ENCODE measurements at regions of chr22 and their contacts with region 1.

Region 1: GRCh38 chr22:25076336-25076735 is 123.3 kb upstream of the CRYBB3 start:
- DNase-seq: peak; percentile 82
- H3K4me3 Mint-ChIP-seq: peak overlapping the region; percentile 43
- H3K27ac Mint-ChIP-seq: peak overlapping the region; percentile 87
- H3K4me1 Mint-ChIP-seq: peaks cover 63% of the 10 kb centered on the region
- H3K27me3 Mint-ChIP-seq: no peaks in the 10 kb centered on the region

Region 2: DNA sequence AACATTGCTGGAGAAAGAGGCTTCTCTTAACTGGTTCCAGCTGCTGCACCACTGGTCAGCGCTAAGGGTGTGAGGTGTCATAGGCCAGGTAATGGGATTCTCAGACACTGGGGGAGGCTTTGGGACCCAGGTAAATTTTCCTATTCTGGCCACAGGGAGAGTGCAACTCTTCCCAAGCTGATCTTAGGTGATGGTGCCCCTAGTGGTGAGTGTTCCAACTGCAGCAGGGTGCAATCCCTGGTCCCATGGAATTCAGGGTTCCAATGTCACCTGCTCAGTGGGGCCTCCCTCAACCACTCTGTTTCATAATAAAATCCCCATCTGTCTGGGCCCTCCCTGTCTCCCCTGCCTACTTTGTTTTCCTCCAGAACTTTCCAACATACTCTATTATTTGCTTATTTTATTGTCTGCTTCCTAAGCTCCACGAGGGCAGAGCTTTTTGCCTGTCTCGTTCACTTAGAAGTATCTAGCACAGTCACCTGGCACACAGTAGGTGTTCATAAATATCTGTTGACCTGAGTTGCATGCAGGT is 273.3 kb before region 1 on chr22:
- CTCF ChIA-PET with region 1: no interaction called
- intact Hi-C with region 1: no loop called
- DNase-seq: peak; percentile 76
- H3K4me3 Mint-ChIP-seq: no peak overlapping the region
- H3K27ac Mint-ChIP-seq: no peak overlapping the region
- H3K4me1 Mint-ChIP-seq: peaks cover 12% of the 10 kb centered on the region
- H3K27me3 Mint-ChIP-seq: no peaks in the 10 kb centered on the region

Region 3: DNA sequence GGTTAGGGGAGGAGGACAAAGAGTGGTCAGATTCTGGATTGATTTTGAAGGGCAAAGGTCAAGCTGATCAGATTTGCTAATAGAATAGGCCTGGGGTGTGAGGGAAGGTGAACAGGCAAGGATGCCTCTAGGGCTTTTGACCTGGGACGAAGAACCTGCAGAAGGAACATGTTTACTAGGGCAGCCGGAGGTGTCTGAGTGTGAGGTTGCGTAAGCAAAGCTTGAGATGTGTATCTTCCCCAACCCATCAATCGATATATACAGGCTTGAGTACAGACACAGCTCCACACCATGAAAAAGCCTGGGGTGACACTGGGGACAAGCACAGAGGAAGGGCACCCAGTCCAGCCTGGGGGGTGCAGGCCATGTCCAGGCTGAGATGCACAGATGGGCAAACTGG is 130.9 kb before region 1 on chr22:
- CTCF ChIA-PET with region 1: no interaction called
- intact Hi-C with region 1: no loop called
- DNase-seq: no peak
- H3K4me3 Mint-ChIP-seq: no peak overlapping the region
- H3K27ac Mint-ChIP-seq: no peak overlapping the region
- H3K4me1 Mint-ChIP-seq: no peaks in the 10 kb centered on the region
- H3K27me3 Mint-ChIP-seq: peaks cover 25% of the 10 kb centered on the region

Region 4: DNA sequence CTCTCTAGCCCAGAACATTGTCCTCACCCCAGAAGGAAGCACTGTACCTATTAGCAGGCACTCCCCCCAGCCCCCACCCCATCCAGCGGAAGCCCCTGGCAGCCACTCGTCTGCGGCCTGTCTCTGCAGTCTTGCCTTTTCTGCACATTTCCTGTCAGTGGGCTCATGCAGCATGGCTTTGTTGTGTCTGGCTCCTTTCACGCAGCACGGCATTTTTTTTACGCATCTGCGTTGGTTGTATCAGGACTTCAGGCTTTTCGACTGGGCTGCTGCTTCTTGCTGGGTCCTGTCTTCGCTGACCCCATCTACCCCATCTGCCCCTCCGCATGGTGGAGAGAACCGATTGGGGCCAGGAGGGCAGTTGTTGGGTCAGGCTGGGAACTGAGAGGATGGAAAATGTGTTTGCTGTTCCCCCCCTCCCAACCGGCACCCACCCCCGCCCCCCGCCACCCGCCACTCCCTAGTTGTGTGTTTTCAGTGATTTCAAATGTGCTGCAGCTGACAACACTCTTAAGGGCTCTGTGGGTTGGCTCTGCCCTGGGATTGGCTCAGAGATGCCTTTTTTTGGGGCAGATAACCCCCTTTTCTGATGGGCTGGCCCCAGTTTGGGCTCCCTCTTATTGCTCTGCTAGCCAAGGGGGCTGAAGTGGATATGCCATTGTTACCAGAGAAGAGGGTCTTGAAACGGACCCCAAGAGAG is 13.8 kb before region 1 on chr22:
- CTCF ChIA-PET with region 1: interaction called, 21 read pairs
- intact Hi-C with region 1: loop called (anchors 1 kb)
- DNase-seq: peak; percentile 83
- H3K4me3 Mint-ChIP-seq: peak overlapping the region; percentile 66
- H3K27ac Mint-ChIP-seq: peak overlapping the region; percentile 88
- H3K4me1 Mint-ChIP-seq: peaks cover 75% of the 10 kb centered on the region
- H3K27me3 Mint-ChIP-seq: no peaks in the 10 kb centered on the region

Region 5: GRCh38 chr22:25134028-25134427 is 57.7 kb after region 1 on chr22:
- CTCF ChIA-PET with region 1: no interaction called
- intact Hi-C with region 1: no loop called
- DNase-seq: no peak
- H3K4me3 Mint-ChIP-seq: no peak overlapping the region
- H3K27ac Mint-ChIP-seq: no peak overlapping the region
- H3K4me1 Mint-ChIP-seq: no peaks in the 10 kb centered on the region
- H3K27me3 Mint-ChIP-seq: no peaks in the 10 kb centered on the region

Measured in activated naive CD4-positive, alpha-beta T cell treated with anti-CD3 and anti-CD28 coated beads for 36 hours (primary cell).